ENCODE measurements at regions of chr17 and their contacts with region 1.

Region 1: GRCh38 chr17:78019367-78019975 is 61.0 kb downstream of the TNRC6C start:
- DNase-seq: no peak
- H3K4me3 Mint-ChIP-seq: no peak overlapping the region
- H3K27ac Mint-ChIP-seq: no peak overlapping the region
- H3K4me1 Mint-ChIP-seq: peaks cover 28% of the 10 kb centered on the region
- H3K27me3 Mint-ChIP-seq: no peaks in the 10 kb centered on the region

Region 2: GRCh38 chr17:77542551-77543490 is 476.6 kb before region 1 on chr17:
- CTCF ChIA-PET with region 1: interaction called, 99 read pairs
- POLR2A ChIA-PET with region 1: no interaction called
- intact Hi-C with region 1: loop called (anchors 5 kb)
- DNase-seq: peak; percentile 76
- H3K4me3 Mint-ChIP-seq: no peak overlapping the region
- H3K27ac Mint-ChIP-seq: no peak overlapping the region
- H3K4me1 Mint-ChIP-seq: no peaks in the 10 kb centered on the region
- H3K27me3 Mint-ChIP-seq: peaks cover 9% of the 10 kb centered on the region

Region 3: GRCh38 chr17:77909236-77909635 is 110.2 kb before region 1 on chr17:
- CTCF ChIA-PET with region 1: no interaction called
- POLR2A ChIA-PET with region 1: no interaction called
- intact Hi-C with region 1: no loop called
- DNase-seq: no peak
- H3K4me3 Mint-ChIP-seq: no peak overlapping the region
- H3K27ac Mint-ChIP-seq: no peak overlapping the region
- H3K4me1 Mint-ChIP-seq: no peaks in the 10 kb centered on the region
- H3K27me3 Mint-ChIP-seq: peaks cover 2% of the 10 kb centered on the region

Region 4: DNA sequence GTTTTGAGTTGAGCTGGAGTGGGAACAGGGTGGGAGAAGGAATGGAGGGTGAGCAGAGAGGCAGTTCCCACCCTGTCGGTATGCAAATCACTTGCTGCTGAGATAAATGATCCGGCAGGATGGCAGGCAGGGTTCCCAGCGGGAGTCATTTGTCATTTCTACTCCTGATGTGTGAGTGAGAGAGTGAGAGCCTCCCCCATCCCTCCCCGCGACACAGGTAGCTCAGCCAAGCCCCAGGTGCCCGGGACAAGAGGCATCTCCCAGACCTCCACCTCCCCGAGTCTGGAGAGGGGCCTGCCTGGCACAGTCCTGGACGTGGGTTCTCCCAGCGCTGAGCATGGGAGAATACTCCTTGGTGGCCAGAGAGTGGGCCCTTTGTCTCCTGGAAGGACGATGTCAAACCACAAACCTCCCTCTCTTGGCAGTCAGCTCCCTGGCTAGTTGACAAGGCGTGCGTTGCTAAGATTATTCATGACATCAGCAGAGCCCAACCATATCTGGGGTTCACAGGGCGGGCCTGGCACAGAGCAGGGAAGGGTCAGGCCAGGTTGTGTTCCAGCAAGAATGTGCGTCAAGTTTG is 94.6 kb before region 1 on chr17:
- CTCF ChIA-PET with region 1: no interaction called
- POLR2A ChIA-PET with region 1: no interaction called
- intact Hi-C with region 1: no loop called
- DNase-seq: no peak
- H3K4me3 Mint-ChIP-seq: no peak overlapping the region
- H3K27ac Mint-ChIP-seq: no peak overlapping the region
- H3K4me1 Mint-ChIP-seq: peaks cover 16% of the 10 kb centered on the region
- H3K27me3 Mint-ChIP-seq: no peaks in the 10 kb centered on the region

Region 5: DNA sequence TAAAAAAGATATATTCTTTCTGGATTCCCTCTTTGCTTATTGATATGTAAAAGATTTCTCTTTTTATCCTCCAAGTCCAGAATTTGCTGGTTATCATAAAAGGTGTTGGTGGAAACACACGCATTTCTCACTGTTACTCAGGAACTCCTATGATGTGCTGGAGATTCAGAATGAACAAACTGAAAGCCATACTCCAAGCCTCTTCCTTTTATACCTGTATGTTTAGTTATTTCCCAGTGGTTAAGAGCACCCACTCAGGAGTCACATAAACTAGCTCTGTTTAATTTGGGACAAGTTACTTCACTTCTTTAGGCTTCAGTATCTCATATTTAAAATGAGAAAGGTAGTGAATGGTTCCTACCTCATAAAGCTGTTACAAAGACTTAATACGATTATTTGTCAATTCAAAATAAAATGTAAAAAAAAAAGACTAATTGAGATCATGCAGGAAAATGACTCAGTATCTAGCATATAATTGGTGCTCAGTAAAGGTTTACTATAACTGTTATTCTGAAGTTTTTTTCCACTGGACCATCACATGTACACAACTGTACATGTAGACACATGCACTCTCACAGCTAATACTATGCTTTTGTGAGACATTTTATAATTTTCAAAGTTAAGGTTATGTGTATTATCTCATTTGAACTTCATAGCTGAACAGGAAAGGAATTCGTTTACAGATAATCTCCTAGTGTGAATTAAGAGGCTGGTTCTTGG is 13.9 kb before region 1 on chr17:
- CTCF ChIA-PET with region 1: interaction called, 42 read pairs
- POLR2A ChIA-PET with region 1: no interaction called
- intact Hi-C with region 1: no loop called
- DNase-seq: no peak
- H3K4me3 Mint-ChIP-seq: no peak overlapping the region
- H3K27ac Mint-ChIP-seq: no peak overlapping the region
- H3K4me1 Mint-ChIP-seq: peaks cover 38% of the 10 kb centered on the region
- H3K27me3 Mint-ChIP-seq: no peaks in the 10 kb centered on the region

Region 6: DNA sequence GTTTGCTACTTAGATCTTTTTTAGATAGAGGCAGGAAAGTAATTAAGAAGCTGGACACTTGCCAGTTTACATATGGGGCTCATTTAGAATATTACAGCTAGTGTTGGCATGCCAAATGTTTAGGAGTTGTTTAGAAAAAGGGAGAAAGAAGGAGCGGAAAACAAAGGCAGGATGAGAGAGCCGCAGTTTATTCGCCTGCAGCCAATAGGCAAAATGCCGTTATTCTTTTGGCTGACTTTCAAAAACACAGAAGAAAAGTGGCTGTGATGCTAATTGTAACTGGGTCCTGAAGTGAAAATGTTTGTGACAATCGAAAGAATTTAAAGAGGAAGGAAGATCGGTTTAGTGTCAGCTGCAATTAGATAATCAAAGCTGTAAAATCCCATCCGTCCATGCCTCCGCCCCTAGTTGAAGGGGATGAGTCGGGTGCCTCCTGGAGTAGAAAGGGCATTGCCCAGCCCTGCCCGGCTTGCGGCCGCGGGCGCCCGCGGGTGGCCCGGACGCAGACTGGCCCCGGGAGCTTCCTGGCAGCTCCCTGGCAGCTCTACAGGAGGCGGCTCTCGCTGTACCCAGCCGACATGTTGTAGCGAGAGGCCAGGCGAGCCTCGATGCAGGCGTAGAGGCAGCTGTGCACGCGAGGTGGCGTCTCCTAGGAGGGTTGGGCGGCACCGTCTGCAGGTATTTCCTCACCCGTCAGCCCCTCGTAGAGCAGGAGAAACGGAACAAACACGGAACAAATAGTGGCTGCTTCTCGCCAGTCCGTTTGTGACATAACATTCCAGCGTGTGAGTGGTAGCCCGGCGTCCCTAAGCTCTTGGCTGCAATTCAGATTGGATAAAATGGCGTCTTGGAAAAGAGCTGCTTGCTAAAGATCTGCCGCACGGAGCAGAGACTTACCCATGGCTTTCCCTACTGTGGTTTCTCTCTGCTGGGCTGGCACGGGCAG is 21.2 kb after region 1 on chr17:
- CTCF ChIA-PET with region 1: interaction called, 19 read pairs
- POLR2A ChIA-PET with region 1: interaction called, 3 read pairs
- intact Hi-C with region 1: no loop called
- DNase-seq: peak; percentile 51
- H3K4me3 Mint-ChIP-seq: peak overlapping the region; percentile 70
- H3K27ac Mint-ChIP-seq: peak overlapping the region; percentile 44
- H3K4me1 Mint-ChIP-seq: peaks cover 22% of the 10 kb centered on the region
- H3K27me3 Mint-ChIP-seq: no peaks in the 10 kb centered on the region

Region 7: GRCh38 chr17:78082988-78083387 is 63.5 kb after region 1 on chr17:
- CTCF ChIA-PET with region 1: interaction called, 55 read pairs
- POLR2A ChIA-PET with region 1: no interaction called
- intact Hi-C with region 1: loop called (anchors 1 kb)
- DNase-seq: no peak
- H3K4me3 Mint-ChIP-seq: no peak overlapping the region
- H3K27ac Mint-ChIP-seq: no peak overlapping the region
- H3K4me1 Mint-ChIP-seq: no peaks in the 10 kb centered on the region
- H3K27me3 Mint-ChIP-seq: no peaks in the 10 kb centered on the region

Region 8: DNA sequence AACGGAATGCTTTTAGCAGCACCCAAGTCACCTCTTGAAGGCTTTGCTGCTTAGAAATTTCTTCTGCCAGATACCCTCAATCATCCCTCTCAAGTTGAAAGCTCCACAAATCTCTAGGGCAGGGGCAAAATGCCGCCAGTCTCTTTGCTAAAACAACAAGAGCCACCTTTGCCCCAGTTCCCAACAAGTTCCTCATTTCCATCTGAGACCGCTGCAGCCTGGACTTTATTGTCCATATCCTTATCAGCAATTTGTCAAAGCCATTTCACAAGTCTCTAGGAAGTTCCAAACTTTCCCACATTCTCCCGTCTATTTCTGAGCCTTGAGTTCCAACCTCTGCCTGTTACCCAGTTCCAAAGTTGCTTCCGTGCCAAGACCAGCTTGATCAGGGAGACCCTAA is 81.6 kb after region 1 on chr17:
- CTCF ChIA-PET with region 1: no interaction called
- POLR2A ChIA-PET with region 1: no interaction called
- intact Hi-C with region 1: no loop called
- DNase-seq: no peak
- H3K4me3 Mint-ChIP-seq: no peak overlapping the region
- H3K27ac Mint-ChIP-seq: no peak overlapping the region
- H3K4me1 Mint-ChIP-seq: no peaks in the 10 kb centered on the region
- H3K27me3 Mint-ChIP-seq: no peaks in the 10 kb centered on the region

Region 9: DNA sequence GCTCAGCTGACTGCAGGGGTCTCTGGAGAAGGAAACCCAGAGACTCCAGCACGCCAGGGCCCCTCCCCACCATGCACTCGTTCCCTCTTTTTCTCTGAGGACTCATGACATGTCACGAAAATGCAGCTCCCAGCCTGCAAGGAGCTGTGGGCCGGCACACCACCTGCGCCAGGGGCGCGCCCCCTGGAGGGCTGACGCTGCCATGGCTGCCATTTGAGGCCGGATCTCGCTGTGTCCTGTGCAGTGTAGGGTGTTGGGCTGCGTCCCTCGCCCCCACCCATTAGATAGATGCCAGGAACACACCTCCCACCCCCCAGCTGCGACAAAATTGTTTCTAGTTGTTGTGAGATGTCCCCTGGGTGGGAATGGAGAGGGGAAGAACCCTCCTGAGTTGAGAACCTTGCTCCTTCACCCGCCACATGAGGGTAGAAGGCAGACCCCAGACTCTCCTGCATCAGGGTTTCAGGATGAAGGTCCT is 157.1 kb after region 1 on chr17:
- CTCF ChIA-PET with region 1: interaction called, 27 read pairs
- POLR2A ChIA-PET with region 1: no interaction called
- intact Hi-C with region 1: no loop called
- DNase-seq: peak; percentile 83
- H3K4me3 Mint-ChIP-seq: no peak overlapping the region
- H3K27ac Mint-ChIP-seq: no peak overlapping the region
- H3K4me1 Mint-ChIP-seq: peaks cover 44% of the 10 kb centered on the region
- H3K27me3 Mint-ChIP-seq: no peaks in the 10 kb centered on the region

Measured in activated CD4-positive, alpha-beta memory T cell treated with anti-CD3 and anti-CD28 coated beads for 36 hours (primary cell).